ENCODE measurements at regions of chr18 and their contacts with region 1.

Region 1: DNA sequence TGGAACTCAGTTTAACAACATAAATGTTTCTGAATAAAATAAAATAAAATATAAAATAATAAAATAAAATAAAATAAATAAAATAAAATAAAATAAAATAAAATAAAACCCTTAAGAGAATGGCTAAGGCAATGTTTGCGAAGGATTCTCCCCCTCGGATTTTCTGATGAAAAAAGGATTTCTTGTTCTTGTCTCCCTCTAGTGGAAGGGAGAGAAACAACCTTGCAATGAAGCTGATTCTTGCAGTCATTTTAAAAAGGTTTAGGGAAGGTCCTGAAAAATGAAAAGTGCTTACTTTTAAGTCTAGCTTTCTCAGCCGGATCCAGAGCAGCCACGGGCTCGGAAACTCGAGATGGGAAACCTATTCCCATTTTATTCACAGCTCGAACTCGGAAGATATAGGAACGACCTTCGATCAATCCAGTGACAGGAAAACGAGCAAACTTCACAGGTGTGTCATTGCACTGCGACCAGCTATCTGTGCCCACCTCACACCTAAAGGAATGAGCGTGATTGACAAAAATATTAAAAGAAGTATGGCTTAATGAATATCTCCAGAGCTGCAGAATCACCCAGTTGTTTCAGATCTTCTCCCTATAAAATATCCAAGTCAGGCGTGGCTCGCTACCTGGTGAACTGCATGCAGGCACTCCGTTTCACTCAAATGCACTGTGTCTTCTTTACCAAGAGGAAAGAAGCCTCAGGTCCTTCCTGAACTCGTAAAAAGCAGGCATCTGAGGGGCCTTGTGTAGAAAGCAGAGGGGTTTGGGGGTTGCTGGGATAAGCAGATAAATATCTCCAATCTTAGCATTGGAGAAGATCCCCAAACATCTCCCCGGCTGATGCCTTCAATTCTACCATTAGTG is 68.1 kb downstream of the MYOM1 start:
- DNase-seq: peak; percentile 50
- H3K4me3 Mint-ChIP-seq: no peak overlapping the region
- H3K27ac Mint-ChIP-seq: peak overlapping the region; percentile 77
- H3K4me1 Mint-ChIP-seq: peaks cover 54% of the 10 kb centered on the region
- H3K27me3 Mint-ChIP-seq: no peaks in the 10 kb centered on the region
- CTCF ChIP-seq: peak; percentile 71

Region 2: GRCh38 chr18:2898186-2898640 is 253.4 kb before region 1 on chr18:
- CTCF ChIA-PET with region 1: no interaction called
- POLR2A ChIA-PET with region 1: no interaction called
- intact Hi-C with region 1: no loop called
- DNase-seq: peak; percentile 36
- H3K4me3 Mint-ChIP-seq: no peak overlapping the region
- H3K27ac Mint-ChIP-seq: no peak overlapping the region
- H3K4me1 Mint-ChIP-seq: no peaks in the 10 kb centered on the region
- H3K27me3 Mint-ChIP-seq: peaks cover 10% of the 10 kb centered on the region
- CTCF ChIP-seq: no peak

Region 3: DNA sequence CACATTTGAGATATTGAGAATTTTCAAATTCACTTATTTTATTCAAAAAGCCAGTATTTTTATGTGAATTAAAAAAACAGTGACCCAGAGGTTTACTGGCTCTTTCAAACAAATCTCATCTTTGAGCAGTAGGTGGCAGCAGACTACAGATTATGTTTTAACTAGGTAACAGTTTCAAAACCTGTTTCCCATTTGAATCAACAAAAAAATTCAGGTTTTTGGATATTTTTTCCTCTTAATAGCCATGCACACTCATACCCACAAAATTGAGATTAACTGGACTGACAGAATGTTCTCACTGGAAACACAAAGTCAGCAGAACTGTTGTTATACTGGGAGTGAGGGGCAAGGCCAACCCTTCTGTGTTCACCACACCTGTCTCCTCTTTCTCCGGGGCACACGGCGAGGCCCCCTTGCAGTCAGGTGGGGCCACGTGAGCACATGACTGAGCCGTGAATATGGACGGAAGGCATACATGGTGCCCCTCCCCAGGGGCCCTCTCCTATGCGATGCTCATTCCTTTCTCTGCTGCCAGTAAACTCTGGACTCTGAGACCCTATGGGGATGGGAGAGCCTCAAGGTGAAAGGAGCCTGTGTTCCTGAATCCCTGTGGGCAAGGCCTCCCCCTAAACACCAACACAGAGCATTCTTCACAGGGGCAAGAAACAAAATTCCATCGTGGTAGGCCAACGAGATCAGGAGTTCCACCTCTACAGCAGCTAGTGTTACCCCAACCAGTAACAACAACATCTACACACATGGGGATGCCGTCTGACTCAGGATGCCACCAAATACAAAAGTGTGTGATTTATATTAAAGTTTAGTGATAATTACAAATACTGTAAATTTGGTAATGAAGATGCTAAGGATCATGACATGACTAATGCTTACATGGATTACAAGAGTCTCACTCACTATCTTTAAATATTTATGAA is 219.1 kb before region 1 on chr18:
- CTCF ChIA-PET with region 1: interaction called, 8 read pairs
- POLR2A ChIA-PET with region 1: no interaction called
- intact Hi-C with region 1: loop called (anchors 1 kb)
- DNase-seq: peak; percentile 71
- H3K4me3 Mint-ChIP-seq: no peak overlapping the region
- H3K27ac Mint-ChIP-seq: no peak overlapping the region
- H3K4me1 Mint-ChIP-seq: peaks cover 10% of the 10 kb centered on the region
- H3K27me3 Mint-ChIP-seq: no peaks in the 10 kb centered on the region
- CTCF ChIP-seq: peak; percentile 69

Region 4: DNA sequence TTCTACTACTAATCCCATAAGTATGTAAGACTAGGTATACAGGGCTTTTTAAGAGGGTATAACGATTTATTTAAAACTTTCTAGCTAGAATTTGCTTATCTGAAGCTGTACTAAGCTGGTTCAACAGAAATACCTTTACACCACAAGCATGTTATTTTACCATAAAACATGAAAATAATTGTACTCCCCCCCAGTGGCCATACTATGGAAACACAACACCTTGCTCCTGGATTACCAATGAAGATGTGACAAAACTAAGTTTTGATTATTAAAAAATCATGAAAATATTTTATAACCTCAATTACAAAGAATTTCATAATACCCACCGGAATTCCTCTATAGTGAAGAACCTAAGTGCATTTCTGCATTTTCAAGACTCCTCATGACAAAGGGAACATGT is 166.0 kb before region 1 on chr18:
- CTCF ChIA-PET with region 1: interaction called, 15 read pairs
- POLR2A ChIA-PET with region 1: no interaction called
- intact Hi-C with region 1: no loop called
- DNase-seq: peak; percentile 52
- H3K4me3 Mint-ChIP-seq: no peak overlapping the region
- H3K27ac Mint-ChIP-seq: no peak overlapping the region
- H3K4me1 Mint-ChIP-seq: peaks cover 35% of the 10 kb centered on the region
- H3K27me3 Mint-ChIP-seq: no peaks in the 10 kb centered on the region
- CTCF ChIP-seq: peak; percentile 37

Region 5: DNA sequence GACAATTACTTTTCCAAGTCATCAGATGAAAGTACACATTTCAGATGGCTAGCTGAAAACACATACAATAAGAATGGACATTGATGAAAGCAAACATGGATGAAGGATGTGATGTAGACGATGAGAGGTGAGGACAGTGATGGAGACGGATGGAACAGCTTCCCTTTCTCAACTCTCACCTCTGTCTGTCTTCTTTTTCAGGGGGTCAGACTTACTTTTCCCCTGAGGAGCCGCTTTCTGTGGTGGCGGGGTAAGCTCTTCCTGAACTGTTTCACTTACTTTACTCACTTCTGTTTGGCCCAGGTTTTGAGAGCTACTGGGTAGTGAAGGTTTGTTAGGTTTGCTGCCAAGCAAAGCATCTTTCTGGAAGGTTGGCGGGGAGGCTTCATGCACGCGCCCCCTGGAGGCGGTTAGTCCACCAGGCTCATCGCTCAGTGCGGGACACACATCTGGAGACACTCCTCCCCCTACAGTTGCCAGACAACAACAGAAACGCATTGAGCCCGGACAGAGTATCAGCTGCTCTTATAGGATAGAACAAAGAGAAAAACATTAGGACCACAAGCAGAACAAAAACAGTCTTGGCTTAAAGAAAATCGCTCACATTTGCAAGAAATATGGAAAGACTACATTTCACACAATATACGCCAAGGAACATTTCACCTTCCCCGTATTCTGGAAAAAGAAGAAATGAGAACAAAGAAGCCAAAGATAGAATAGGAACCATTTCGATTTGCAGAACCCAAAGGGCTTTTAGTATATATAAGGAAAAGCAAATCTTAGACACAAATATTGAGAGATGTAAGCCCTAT is 22.4 kb before region 1 on chr18:
- CTCF ChIA-PET with region 1: interaction called, 25 read pairs
- POLR2A ChIA-PET with region 1: no interaction called
- intact Hi-C with region 1: no loop called
- DNase-seq: peak; percentile 84
- H3K4me3 Mint-ChIP-seq: no peak overlapping the region
- H3K27ac Mint-ChIP-seq: no peak overlapping the region
- H3K4me1 Mint-ChIP-seq: peaks cover 10% of the 10 kb centered on the region
- H3K27me3 Mint-ChIP-seq: no peaks in the 10 kb centered on the region
- CTCF ChIP-seq: peak; percentile 72

Region 6: GRCh38 chr18:3183103-3183717 is 31.6 kb after region 1 on chr18:
- CTCF ChIA-PET with region 1: interaction called, 12 read pairs
- POLR2A ChIA-PET with region 1: no interaction called
- intact Hi-C with region 1: no loop called
- DNase-seq: no peak
- H3K4me3 Mint-ChIP-seq: no peak overlapping the region
- H3K27ac Mint-ChIP-seq: no peak overlapping the region
- H3K4me1 Mint-ChIP-seq: no peaks in the 10 kb centered on the region
- H3K27me3 Mint-ChIP-seq: no peaks in the 10 kb centered on the region
- CTCF ChIP-seq: no peak

Region 7: GRCh38 chr18:4557502-4557901 is 1405.9 kb after region 1 on chr18:
- CTCF ChIA-PET with region 1: no interaction called
- POLR2A ChIA-PET with region 1: no interaction called
- intact Hi-C with region 1: no loop called
- DNase-seq: no peak
- H3K4me3 Mint-ChIP-seq: no peak overlapping the region
- H3K27ac Mint-ChIP-seq: no peak overlapping the region
- H3K4me1 Mint-ChIP-seq: no peaks in the 10 kb centered on the region
- H3K27me3 Mint-ChIP-seq: no peaks in the 10 kb centered on the region
- CTCF ChIP-seq: no peak